PC-3 (cell line): ENCODE measurements at regions of chr4 and their contacts with region 1.

Region 1: DNA sequence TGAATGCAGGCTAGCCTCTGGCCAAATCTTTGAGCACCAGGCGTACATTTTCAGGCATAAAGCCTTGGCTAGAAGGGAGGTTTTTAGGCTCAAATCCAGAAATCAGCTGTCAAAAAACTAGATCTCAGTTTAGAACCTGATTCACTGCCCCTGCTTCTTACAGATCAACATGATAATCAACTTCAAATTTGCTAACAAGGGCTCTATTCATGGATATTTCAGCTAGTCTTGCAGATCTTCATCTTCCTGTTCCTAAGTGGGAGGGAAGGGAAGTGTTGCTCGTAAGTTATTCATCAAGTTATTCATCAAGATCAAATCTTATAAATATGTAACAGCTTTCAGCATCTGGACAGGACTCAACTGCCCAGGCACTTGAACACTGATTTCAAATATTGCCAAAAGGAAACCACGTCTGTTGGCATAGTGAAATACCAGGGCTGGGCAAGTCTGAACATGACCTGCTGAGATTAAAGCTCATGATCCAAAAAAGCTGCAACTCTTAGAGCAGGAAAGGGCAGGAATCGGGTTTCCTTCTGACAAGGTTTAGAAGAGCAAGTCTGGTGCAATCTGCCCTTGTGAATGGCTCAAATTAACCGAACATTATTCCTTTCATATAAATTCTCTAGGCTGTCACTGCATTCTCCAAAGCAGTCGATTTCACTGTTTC is 200.3 kb downstream of the PDGFC start:
- DNase-seq: peak; percentile 85
- ATAC-seq: peak; percentile 83
- H3K4me3 ChIP-seq: peak overlapping the region; percentile 50
- H3K27ac ChIP-seq: peak overlapping the region; percentile 57
- H3K4me1 ChIP-seq: peaks cover 53% of the 10 kb centered on the region
- H3K27me3 ChIP-seq: no peaks in the 10 kb centered on the region
- CTCF ChIP-seq: no peak

Region 2: DNA sequence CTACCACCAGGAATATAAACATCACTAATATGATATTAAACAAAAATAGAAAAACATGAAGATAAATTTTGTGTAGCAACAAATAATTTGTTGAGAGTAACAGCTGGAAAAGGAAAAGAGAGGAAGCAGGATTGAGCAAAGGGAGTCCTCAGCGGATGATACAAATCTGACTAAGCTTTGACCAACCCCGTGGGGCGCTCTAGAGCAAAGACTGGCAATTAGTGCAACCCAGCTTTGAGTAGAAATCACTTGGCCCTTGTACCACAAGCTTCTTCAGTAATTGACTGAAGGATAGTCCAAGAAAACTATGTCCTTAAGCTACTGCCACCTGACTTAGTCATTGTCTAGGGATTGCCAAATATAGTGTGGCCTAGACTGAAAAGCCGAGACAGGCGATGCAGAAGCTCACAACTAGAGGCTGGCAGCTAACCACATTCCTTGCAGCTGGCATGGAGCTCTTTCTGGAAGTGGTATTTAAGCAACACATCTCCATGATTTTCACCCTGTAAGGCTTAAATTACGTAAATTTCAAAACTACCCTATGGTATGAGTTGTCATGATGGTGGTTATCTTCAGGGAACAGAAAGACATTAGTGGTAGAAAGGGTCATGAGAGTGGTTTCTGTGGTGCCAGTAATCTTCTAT is 195.8 kb before region 1 on chr4:
- CTCF ChIA-PET with region 1: no interaction called
- POLR2A ChIA-PET with region 1: no interaction called
- intact Hi-C with region 1: loop called (anchors 10 kb)
- DNase-seq: peak; percentile 32
- ATAC-seq: no peak
- H3K4me3 ChIP-seq: no peak overlapping the region
- H3K27ac ChIP-seq: no peak overlapping the region
- H3K4me1 ChIP-seq: peaks cover 15% of the 10 kb centered on the region
- H3K27me3 ChIP-seq: no peaks in the 10 kb centered on the region
- CTCF ChIP-seq: no peak

Region 3: DNA sequence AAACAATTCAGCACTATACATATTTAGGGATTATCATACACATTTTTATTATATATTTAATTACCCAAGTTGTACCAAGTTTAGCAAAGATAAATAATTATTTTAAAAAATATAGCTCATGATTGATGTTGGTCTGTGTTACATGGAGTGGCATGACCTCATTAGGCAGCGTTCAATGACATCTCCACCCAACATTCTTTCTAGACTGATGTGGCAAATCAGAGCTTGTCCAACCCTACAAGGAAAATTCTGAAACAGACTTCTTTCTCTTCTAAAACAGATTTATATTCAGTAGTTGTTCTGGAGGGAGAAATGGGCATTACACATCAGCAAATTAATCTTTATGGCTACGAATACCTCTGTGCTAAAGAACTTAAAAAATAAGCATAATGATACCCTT is 10.5 kb after region 1 on chr4:
- CTCF ChIA-PET with region 1: no interaction called
- POLR2A ChIA-PET with region 1: no interaction called
- intact Hi-C with region 1: no loop called
- DNase-seq: peak; percentile 41
- ATAC-seq: no peak
- H3K4me3 ChIP-seq: no peak overlapping the region
- H3K27ac ChIP-seq: no peak overlapping the region
- H3K4me1 ChIP-seq: peaks cover 57% of the 10 kb centered on the region
- H3K27me3 ChIP-seq: no peaks in the 10 kb centered on the region
- CTCF ChIP-seq: no peak

Region 4: DNA sequence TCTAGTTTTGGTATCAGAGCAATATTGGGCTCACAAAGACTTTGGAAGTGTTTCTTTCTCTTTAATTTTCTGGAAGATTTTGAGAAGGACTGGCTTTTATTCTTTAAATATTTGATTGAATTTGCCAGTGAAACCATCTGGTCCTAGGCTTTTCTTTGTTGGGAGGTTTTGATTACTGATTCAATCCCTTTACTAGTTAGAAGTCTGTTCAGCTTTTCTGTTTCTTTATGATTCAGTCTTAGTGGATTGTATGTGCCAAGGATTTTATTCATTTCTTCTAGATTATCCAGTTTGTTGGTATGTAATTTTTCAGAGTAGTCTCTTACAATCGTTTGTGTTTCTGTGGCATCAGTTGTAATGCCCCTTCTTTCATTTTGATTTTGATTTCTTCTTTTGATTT is 333.2 kb after region 1 on chr4:
- CTCF ChIA-PET with region 1: no interaction called
- POLR2A ChIA-PET with region 1: no interaction called
- intact Hi-C with region 1: no loop called
- DNase-seq: no peak
- ATAC-seq: no peak
- H3K4me3 ChIP-seq: no peak overlapping the region
- H3K27ac ChIP-seq: no peak overlapping the region
- H3K4me1 ChIP-seq: no peaks in the 10 kb centered on the region
- H3K27me3 ChIP-seq: no peaks in the 10 kb centered on the region
- CTCF ChIP-seq: no peak